B cell (primary cell): ENCODE measurements at regions of chr1 and their contacts with region 1.

Region 1: GRCh38 chr1:110963691-110964399 is at the start of gene LRIF1:
- DNase-seq: peak; percentile 100
- ATAC-seq: peak; percentile 96
- H3K4me3 ChIP-seq: peak within 1 kb of the TSS; percentile 62 to 98 (median 82)
- H3K4me3 Mint-ChIP-seq: peak within 1 kb of the TSS; percentile 83
- H3K27ac ChIP-seq: peak within 1 kb of the TSS; percentile 95 to 98
- H3K27ac Mint-ChIP-seq: peak within 1 kb of the TSS; percentile 88
- H3K4me1 ChIP-seq: peaks cover 20 to 21% of the 10 kb centered on the region in 2 donors
- H3K4me1 Mint-ChIP-seq: peaks cover 30% of the 10 kb centered on the region
- H3K27me3 ChIP-seq: peaks cover 0 to 13% (median 7%) of the 10 kb centered on the region in 4 experiments
- H3K27me3 Mint-ChIP-seq: peaks cover 10% of the 10 kb centered on the region
- CTCF ChIP-seq: peak; percentile 60
- total RNA-seq, gene LRIF1: 22.6 and 26.5 TPM in 2 replicates

Region 2: DNA sequence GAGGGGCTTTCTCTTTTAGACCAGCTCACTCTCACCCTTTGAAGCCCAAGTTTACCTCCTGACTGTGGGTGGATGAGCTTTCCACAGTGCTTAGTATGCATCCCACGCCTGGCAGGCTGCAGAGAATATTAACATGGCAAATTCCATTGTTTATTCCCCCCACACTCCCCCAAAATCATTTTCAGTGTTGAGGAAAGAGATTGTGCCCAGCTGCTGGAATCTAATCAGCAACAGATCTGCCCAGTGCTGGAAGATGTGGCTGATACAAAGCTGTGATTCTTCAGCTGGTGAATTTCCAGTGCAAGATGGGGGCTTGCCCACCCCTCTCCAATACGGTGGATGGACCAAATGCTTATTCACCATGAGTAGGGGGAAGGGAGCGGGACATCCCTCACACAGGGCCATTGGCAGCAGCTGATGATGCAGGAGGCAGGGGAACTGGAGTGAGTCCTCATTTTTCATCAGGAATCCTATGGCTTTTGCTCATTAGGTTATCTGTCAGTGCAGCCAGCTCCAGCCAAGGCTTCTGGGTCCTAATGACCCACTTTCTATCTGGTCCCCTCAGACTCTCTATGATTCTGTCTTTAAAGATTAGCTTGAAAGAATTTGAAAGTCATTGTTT is 249.4 kb before region 1 on chr1:
- CTCF ChIA-PET with region 1: no interaction called
- POLR2A ChIA-PET with region 1: no interaction called
- intact Hi-C with region 1: no loop called
- DNase-seq: no peak
- ATAC-seq: no peak
- H3K4me3 ChIP-seq: no peak overlapping the region
- H3K4me3 Mint-ChIP-seq: no peak overlapping the region
- H3K27ac ChIP-seq: no peak overlapping the region
- H3K27ac Mint-ChIP-seq: no peak overlapping the region
- H3K4me1 ChIP-seq: no peaks in the 10 kb centered on the region
- H3K4me1 Mint-ChIP-seq: peaks cover 2% of the 10 kb centered on the region
- H3K27me3 ChIP-seq: no peaks in the 10 kb centered on the region
- H3K27me3 Mint-ChIP-seq: peaks cover 5% of the 10 kb centered on the region
- CTCF ChIP-seq: no peak

Region 3: DNA sequence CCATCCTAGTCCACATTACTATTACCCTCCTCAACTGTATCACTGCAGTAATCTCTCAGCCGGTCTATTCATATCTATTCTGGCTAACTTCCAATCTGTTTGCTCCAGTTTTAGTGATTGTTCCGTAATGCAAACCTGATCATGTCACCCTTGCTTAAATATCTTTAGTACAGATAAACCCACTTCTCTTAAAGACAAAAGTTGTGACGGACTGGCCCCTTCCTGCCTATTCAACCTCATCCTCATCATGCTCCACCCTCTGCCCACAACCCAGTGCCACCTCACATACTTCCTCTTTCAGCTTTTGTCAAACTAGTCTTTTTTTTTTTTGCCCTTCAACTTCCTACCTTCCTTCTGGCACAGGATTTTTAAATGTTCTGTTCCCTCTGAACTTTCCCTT is 507.2 kb after region 1 on chr1:
- CTCF ChIA-PET with region 1: no interaction called
- POLR2A ChIA-PET with region 1: no interaction called
- intact Hi-C with region 1: loop called (anchors 5 kb)
- DNase-seq: peak; percentile 92
- ATAC-seq: peak; percentile 94
- H3K4me3 ChIP-seq: peak overlapping the region in 3 of 5 experiments; percentile 10 to 52 (median 36)
- H3K4me3 Mint-ChIP-seq: no peak overlapping the region
- H3K27ac ChIP-seq: peak overlapping the region; percentile 88 to 92
- H3K27ac Mint-ChIP-seq: no peak overlapping the region
- H3K4me1 ChIP-seq: peaks cover 55% of the 10 kb centered on the region in 2 donors
- H3K4me1 Mint-ChIP-seq: peaks cover 30% of the 10 kb centered on the region
- H3K27me3 ChIP-seq: no peaks in the 10 kb centered on the region
- H3K27me3 Mint-ChIP-seq: no peaks in the 10 kb centered on the region
- CTCF ChIP-seq: no peak